ENCODE measurements at regions of chr7 and their contacts with region 1.

Region 1: GRCh38 chr7:100101016-100101862 is at the starts of genes AP4M1 and MCM7:
- DNase-seq: peak; percentile 99
- ATAC-seq: peak; percentile 85 to 86
- H3K4me3 ChIP-seq: peak within 1 kb of the TSS; percentile 60 to 97 (median 85)
- H3K27ac ChIP-seq: peak within 1 kb of the TSS; percentile 89 to 97 (median 94)
- H3K4me1 ChIP-seq: peaks cover 13 to 17% of the 10 kb centered on the region in 2 donors
- H3K27me3 ChIP-seq: no peaks in the 10 kb centered on the region
- CTCF ChIP-seq: no peak
- POLR2A ChIP-seq: peak in 1 of 2 donors; percentile 28
- total RNA-seq, gene AP4M1: 7.2 to 13.8 (median 10.8) TPM
- total RNA-seq, gene MCM7: 23.9 to 45.7 (median 36.1) TPM

Region 2: GRCh38 chr7:100049441-100050311 is 51.6 kb before region 1 on chr7 and contains the start of gene ZSCAN21:
- in situ Hi-C with region 1: no loop called
- intact Hi-C with region 1: loop called (anchors 1 kb)
- DNase-seq: peak; percentile 67 to 79
- ATAC-seq: peak; percentile 86 to 91
- H3K4me3 ChIP-seq: peak within 1 kb of the TSS; percentile 74 to 94 (median 82)
- H3K27ac ChIP-seq: peak within 1 kb of the TSS; percentile 92 to 98 (median 97)
- H3K4me1 ChIP-seq: peaks cover 8 to 15% of the 10 kb centered on the region in 2 donors
- H3K27me3 ChIP-seq: no peaks in the 10 kb centered on the region
- CTCF ChIP-seq: peak in 1 of 5 experiments; percentile 35
- POLR2A ChIP-seq: peak; percentile 76 to 85
- total RNA-seq, gene ZSCAN21: 14.4 to 26.4 (median 22.3) TPM

Region 3: DNA sequence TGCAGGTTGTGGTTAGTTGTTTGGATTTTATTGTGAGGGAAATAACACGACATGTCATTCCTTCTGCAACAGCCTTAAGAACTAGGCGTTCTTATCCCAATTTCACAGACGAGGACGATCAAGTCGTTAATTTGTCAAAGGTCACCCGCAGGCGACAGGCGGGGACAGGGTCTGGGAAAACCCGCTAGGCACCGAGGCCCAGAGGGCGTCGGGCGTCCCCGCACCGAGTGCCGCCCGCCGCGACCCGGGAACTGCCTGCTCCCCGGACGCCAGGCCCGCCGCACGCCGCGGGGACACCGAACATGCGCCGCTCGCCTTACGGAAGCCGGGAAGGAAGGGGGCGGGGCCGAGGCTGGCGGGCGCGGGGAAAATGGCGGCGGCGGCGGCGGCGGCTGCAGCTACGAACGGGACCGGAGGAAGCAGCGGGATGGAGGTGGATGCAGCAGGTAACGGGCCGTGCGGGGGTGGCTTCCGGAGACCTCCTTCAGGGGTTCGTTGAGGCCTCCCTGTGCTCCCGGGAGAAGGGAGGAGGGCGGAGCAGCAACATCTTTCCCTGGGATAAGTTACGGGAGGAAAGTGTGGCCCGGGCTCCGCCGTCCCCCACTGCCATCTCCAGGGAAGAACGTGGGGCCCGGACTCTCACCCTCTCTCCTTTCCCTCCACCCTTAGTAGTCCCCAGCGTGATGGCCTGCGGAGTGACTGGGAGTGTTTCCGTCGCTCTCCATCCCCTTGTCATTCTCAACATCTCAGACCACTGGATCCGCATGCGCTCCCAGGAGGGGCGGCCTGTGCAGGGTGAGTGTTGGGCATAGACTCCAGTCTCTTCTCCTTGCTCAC is 12.4 kb before region 1 on chr7 and contains the start of gene COPS6:
- in situ Hi-C with region 1: no loop called
- intact Hi-C with region 1: loop called (anchors 1 kb)
- DNase-seq: peak; percentile 64 to 76
- ATAC-seq: peak; percentile 73 to 78
- H3K4me3 ChIP-seq: peak within 1 kb of the TSS; percentile 79 to 90 (median 88)
- H3K27ac ChIP-seq: peak within 1 kb of the TSS; percentile 88 to 97 (median 89)
- H3K4me1 ChIP-seq: peaks cover 13 to 14% of the 10 kb centered on the region in 2 donors
- H3K27me3 ChIP-seq: no peaks in the 10 kb centered on the region
- CTCF ChIP-seq: peak in 1 of 5 experiments; percentile 20
- POLR2A ChIP-seq: peak; percentile 83
- total RNA-seq, gene COPS6: 32.6 to 57.9 (median 39.4) TPM

Region 4: GRCh38 chr7:100126931-100127865 is 26.0 kb after region 1 on chr7 and contains the start of gene MBLAC1:
- in situ Hi-C with region 1: no loop called
- intact Hi-C with region 1: loop called (anchors 1 kb)
- DNase-seq: peak; percentile 82 to 84
- ATAC-seq: peak; percentile 93 to 94
- H3K4me3 ChIP-seq: peak within 1 kb of the TSS; percentile 75 to 94 (median 84)
- H3K27ac ChIP-seq: peak within 1 kb of the TSS; percentile 90 to 96 (median 92)
- H3K4me1 ChIP-seq: peaks cover 11 to 22% of the 10 kb centered on the region in 2 donors
- H3K27me3 ChIP-seq: no peaks in the 10 kb centered on the region
- CTCF ChIP-seq: no peak
- POLR2A ChIP-seq: no peak
- total RNA-seq, gene MBLAC1: 1.4 to 7.4 (median 3.1) TPM

Region 5: GRCh38 chr7:100428199-100428966 is 327.1 kb after region 1 on chr7 and contains the start of gene ZCWPW1:
- in situ Hi-C with region 1: no loop called
- intact Hi-C with region 1: loop called (anchors 5 kb)
- DNase-seq: peak; percentile 90 to 95
- ATAC-seq: peak; percentile 67 to 68
- H3K4me3 ChIP-seq: peak within 1 kb of the TSS; percentile 74 to 88 (median 83)
- H3K27ac ChIP-seq: peak within 1 kb of the TSS; percentile 90 to 99 (median 98)
- H3K4me1 ChIP-seq: peaks cover 24 to 29% of the 10 kb centered on the region in 2 donors
- H3K27me3 ChIP-seq: no peaks in the 10 kb centered on the region
- CTCF ChIP-seq: peak in 2 of 5 experiments; percentile 5 to 17
- POLR2A ChIP-seq: peak; percentile 98 to 99
- total RNA-seq, gene ZCWPW1: 1.6 to 8.5 (median 2.7) TPM